ENCODE measurements at regions of chr7 and their contacts with region 1.

Region 1: GRCh38 chr7:25851332-25852210 is 300.4 kb upstream of the NFE2L3 start:
- DNase-seq: peak; percentile 81
- H3K4me3 ChIP-seq: peak overlapping the region; percentile 21 to 38; a peak in 2 of 4 replicates
- H3K27ac ChIP-seq: no peak overlapping the region
- H3K4me1 ChIP-seq: peaks cover 0 to 24% of the 10 kb centered on the region in 2 experiments; a peak in 2 of 4 replicates
- H3K27me3 ChIP-seq: peaks cover 49% of the 10 kb centered on the region
- CTCF ChIP-seq: peak; percentile 92
- EP300 ChIP-seq: no peak
- RAD21 ChIP-seq: peak; percentile 99

Region 2: GRCh38 chr7:25259587-25260243 is 591.9 kb before region 1 on chr7:
- CTCF ChIA-PET with region 1: interaction called, 94 read pairs
- POLR2A ChIA-PET with region 1: no interaction called
- DNase-seq: peak; percentile 79
- H3K4me3 ChIP-seq: peak overlapping the region in 1 of 2 experiments; percentile 15; a peak in 1 of 4 replicates
- H3K27ac ChIP-seq: no peak overlapping the region
- H3K4me1 ChIP-seq: peaks cover 0 to 4% of the 10 kb centered on the region in 2 experiments; a peak in 2 of 4 replicates
- H3K27me3 ChIP-seq: peaks cover 10% of the 10 kb centered on the region; the same call in 1 of the 2 replicates
- CTCF ChIP-seq: peak; percentile 94
- EP300 ChIP-seq: no peak
- RAD21 ChIP-seq: peak; percentile 99

Region 3: DNA sequence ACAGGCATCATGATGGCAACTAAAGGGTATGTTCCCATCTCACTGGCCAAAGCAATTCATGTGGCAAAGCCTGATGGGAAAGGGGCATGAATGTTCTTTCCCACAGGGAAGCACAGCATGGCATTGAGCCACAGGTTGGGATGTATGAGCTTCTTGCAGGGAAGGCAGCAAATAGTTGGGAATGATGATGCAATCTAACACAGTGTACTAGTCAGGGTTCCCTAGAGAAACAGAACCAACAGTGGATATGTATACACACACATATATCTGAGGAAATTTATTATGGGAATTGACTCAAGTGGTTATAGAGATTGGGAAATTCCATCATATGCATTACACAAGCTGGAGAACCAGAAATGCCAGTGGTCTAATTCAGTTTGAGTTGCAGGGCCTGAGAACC is 369.7 kb before region 1 on chr7:
- CTCF ChIA-PET with region 1: interaction called, 10 read pairs
- POLR2A ChIA-PET with region 1: no interaction called
- DNase-seq: no peak
- H3K4me3 ChIP-seq: no peak overlapping the region
- H3K27ac ChIP-seq: no peak overlapping the region
- H3K4me1 ChIP-seq: no peaks in the 10 kb centered on the region
- H3K27me3 ChIP-seq: no peaks in the 10 kb centered on the region
- CTCF ChIP-seq: no peak
- EP300 ChIP-seq: no peak
- RAD21 ChIP-seq: no peak

Region 4: GRCh38 chr7:25615003-25615402 is 236.6 kb before region 1 on chr7:
- CTCF ChIA-PET with region 1: interaction called, 12 read pairs
- POLR2A ChIA-PET with region 1: interaction called, 5 read pairs
- DNase-seq: no peak
- H3K4me3 ChIP-seq: no peak overlapping the region
- H3K27ac ChIP-seq: no peak overlapping the region
- H3K4me1 ChIP-seq: peaks cover 0 to 11% of the 10 kb centered on the region in 2 experiments; a peak in 2 of 4 replicates
- H3K27me3 ChIP-seq: no peaks in the 10 kb centered on the region
- CTCF ChIP-seq: no peak
- EP300 ChIP-seq: no peak
- RAD21 ChIP-seq: no peak

Region 5: GRCh38 chr7:25669961-25670841 is 181.4 kb before region 1 on chr7:
- CTCF ChIA-PET with region 1: interaction called, 26 read pairs
- POLR2A ChIA-PET with region 1: no interaction called
- DNase-seq: no peak
- H3K4me3 ChIP-seq: no peak overlapping the region
- H3K27ac ChIP-seq: peak overlapping the region in 1 of 2 experiments; percentile 68; a peak in 2 of 4 replicates
- H3K4me1 ChIP-seq: peaks cover 0 to 45% of the 10 kb centered on the region in 2 experiments; a peak in 2 of 4 replicates
- H3K27me3 ChIP-seq: no peaks in the 10 kb centered on the region
- CTCF ChIP-seq: no peak
- EP300 ChIP-seq: no peak
- RAD21 ChIP-seq: no peak

Region 6: GRCh38 chr7:25839084-25839769 is 12.3 kb before region 1 on chr7:
- CTCF ChIA-PET with region 1: interaction called, 61 read pairs
- POLR2A ChIA-PET with region 1: no interaction called
- DNase-seq: no peak
- H3K4me3 ChIP-seq: no peak overlapping the region
- H3K27ac ChIP-seq: no peak overlapping the region
- H3K4me1 ChIP-seq: no peaks in the 10 kb centered on the region; a peak in 1 of 4 replicates
- H3K27me3 ChIP-seq: no peaks in the 10 kb centered on the region
- CTCF ChIP-seq: peak; percentile 50
- EP300 ChIP-seq: no peak
- RAD21 ChIP-seq: 0 out of 2 replicates have a peak, but pooled peaks have one; percentile 16

Region 7: DNA sequence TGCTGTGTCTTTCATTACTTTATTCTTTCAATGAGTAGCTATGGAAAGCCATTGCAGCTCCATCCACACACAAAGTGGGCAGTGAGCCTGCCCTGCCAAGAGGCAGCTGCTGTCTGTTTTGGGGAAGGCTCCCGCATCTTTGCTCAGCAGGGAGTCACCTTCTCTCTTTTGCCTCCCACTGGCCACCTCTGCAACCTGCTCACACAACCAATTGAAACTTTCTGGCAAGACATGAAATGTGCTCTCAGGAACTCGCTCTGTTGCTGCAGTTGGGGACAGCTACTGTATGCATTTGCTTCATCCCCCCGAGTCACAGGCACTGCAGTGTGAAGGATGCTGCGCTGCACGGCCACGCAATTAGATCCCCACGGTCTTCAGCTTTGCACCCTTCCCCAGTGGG is 55.6 kb after region 1 on chr7:
- CTCF ChIA-PET with region 1: no interaction called
- POLR2A ChIA-PET with region 1: no interaction called
- DNase-seq: no peak
- H3K4me3 ChIP-seq: no peak overlapping the region
- H3K27ac ChIP-seq: no peak overlapping the region
- H3K4me1 ChIP-seq: no peaks in the 10 kb centered on the region
- H3K27me3 ChIP-seq: no peaks in the 10 kb centered on the region
- CTCF ChIP-seq: no peak
- EP300 ChIP-seq: no peak
- RAD21 ChIP-seq: no peak

Measured in SK-N-SH (cell line).